MCF 10A (cell line): ENCODE measurements at regions of chr10 and their contacts with region 1.

Region 1: GRCh38 chr10:90652519-90652918 is 205.3 kb downstream of the HTR7 start:
- DNase-seq: peak; percentile 49
- H3K4me3 Mint-ChIP-seq: no peak overlapping the region
- H3K27ac Mint-ChIP-seq: no peak overlapping the region
- H3K4me1 Mint-ChIP-seq: no peaks in the 10 kb centered on the region
- H3K27me3 Mint-ChIP-seq: no peaks in the 10 kb centered on the region
- CTCF ChIP-seq: peak; percentile 57

Region 2: DNA sequence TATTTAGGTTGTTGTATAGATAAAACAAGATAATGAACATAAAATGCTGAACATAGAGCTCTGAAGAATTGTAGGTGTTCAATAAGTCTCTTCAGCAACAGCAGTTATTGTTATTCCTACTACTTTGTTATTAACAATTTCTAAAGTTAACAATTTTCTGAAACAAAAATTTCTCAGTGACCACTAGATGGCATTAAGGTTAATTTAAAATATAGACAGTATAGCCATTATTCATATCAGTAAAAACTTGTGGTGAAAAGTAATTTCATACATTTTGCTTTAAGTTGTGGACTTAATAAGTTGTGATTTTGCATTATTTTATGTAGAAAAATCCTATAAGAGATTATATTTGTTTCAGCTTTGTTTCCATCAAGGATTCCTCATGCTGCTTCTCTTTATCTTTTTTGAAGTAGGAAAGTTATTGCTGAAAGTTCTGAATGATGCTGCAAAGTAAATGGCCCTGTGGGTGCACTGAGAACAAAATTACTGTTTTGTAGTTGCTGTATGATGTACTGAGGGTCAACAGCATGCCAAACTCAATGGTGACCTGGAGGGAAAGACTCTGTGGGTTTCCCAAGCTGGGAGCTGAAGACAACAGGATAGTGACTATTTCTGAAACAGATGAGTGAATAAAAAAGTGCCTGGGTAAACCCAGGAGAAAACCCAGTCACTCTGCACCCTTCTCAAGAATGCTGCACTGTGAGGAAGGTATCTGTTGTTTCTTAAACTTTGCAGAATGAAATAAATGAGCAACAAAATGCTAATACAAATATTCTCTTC is 697.5 kb before region 1 on chr10:
- CTCF ChIA-PET with region 1: interaction called, 5 read pairs
- POLR2A ChIA-PET with region 1: no interaction called
- intact Hi-C with region 1: loop called (anchors 5 kb)
- DNase-seq: peak; percentile 13
- H3K4me3 Mint-ChIP-seq: no peak overlapping the region
- H3K27ac Mint-ChIP-seq: no peak overlapping the region
- H3K4me1 Mint-ChIP-seq: no peaks in the 10 kb centered on the region
- H3K27me3 Mint-ChIP-seq: no peaks in the 10 kb centered on the region
- CTCF ChIP-seq: peak; percentile 44

Region 3: DNA sequence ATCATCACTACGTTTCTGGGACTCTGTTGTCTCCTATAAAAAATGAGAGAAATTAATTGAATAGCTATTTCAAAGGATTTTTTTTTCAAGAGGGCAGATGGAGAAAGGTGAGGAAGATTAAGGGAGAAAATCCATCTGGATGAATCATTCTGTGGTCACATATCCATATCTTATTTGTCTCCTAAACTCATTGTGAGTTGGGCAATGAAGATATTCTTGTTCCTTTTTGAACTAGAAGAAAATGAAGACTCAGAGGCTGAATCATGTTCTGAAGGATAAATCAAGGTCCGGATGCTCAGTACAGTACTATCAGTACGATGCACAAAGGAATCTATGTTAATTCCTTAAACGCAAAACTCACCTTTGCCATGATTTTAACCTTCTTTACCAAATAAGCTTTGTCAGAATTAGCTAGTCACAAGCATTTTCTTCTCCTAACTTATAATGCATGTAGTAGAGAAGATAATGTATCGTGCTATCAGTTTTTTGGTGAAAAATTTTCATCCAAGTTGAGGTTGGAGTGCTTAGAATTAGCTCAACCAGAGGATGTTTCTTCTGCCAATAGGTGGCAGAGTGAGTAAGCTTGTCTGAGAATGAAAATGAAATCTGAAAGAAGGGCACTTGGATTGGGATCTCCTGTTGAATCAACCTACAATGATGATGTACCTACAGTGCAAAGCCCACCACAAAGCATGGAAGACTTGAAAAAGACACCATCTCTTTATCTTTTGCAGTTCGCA is 504.2 kb before region 1 on chr10:
- CTCF ChIA-PET with region 1: interaction called, 4 read pairs
- POLR2A ChIA-PET with region 1: no interaction called
- intact Hi-C with region 1: loop called (anchors 1 kb)
- DNase-seq: peak; percentile 60
- H3K4me3 Mint-ChIP-seq: no peak overlapping the region
- H3K27ac Mint-ChIP-seq: peak overlapping the region; percentile 44
- H3K4me1 Mint-ChIP-seq: peaks cover 14% of the 10 kb centered on the region
- H3K27me3 Mint-ChIP-seq: no peaks in the 10 kb centered on the region
- CTCF ChIP-seq: peak; percentile 57

Region 4: GRCh38 chr10:90288391-90288933 is 364.1 kb before region 1 on chr10:
- CTCF ChIA-PET with region 1: no interaction called
- POLR2A ChIA-PET with region 1: no interaction called
- intact Hi-C with region 1: loop called (anchors 1 kb)
- DNase-seq: peak; percentile 42
- H3K4me3 Mint-ChIP-seq: no peak overlapping the region
- H3K27ac Mint-ChIP-seq: no peak overlapping the region
- H3K4me1 Mint-ChIP-seq: peaks cover 25% of the 10 kb centered on the region
- H3K27me3 Mint-ChIP-seq: no peaks in the 10 kb centered on the region
- CTCF ChIP-seq: peak; percentile 31

Region 5: DNA sequence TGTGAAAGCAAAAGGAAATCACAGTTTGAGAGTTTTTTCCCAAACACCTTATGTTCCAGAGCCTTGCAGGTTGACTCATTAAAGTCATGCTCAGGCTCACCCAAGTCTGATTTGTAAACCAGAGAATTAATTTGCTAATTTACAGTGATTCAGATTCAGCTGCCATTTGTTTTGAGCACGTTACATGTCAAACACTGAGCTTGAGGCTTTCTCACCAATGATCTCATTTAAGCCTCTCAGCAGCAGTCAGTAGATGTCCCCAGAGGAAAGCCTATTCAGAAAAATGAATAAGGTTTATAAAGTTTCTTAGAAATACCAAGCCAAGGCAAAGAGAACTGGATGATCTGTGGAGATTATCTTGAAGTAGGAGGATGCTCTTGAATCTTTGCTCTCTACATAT is 215.1 kb before region 1 on chr10:
- CTCF ChIA-PET with region 1: no interaction called
- POLR2A ChIA-PET with region 1: no interaction called
- intact Hi-C with region 1: loop called (anchors 1 kb)
- DNase-seq: no peak
- H3K4me3 Mint-ChIP-seq: no peak overlapping the region
- H3K27ac Mint-ChIP-seq: peak overlapping the region; percentile 60
- H3K4me1 Mint-ChIP-seq: peaks cover 4% of the 10 kb centered on the region
- H3K27me3 Mint-ChIP-seq: no peaks in the 10 kb centered on the region
- CTCF ChIP-seq: no peak

Region 6: GRCh38 chr10:90642136-90642535 is 10.4 kb before region 1 on chr10:
- CTCF ChIA-PET with region 1: interaction called, 10 read pairs
- POLR2A ChIA-PET with region 1: interaction called, 6 read pairs
- intact Hi-C with region 1: no loop called
- DNase-seq: peak; percentile 1
- H3K4me3 Mint-ChIP-seq: no peak overlapping the region
- H3K27ac Mint-ChIP-seq: no peak overlapping the region
- H3K4me1 Mint-ChIP-seq: peaks cover 14% of the 10 kb centered on the region
- H3K27me3 Mint-ChIP-seq: no peaks in the 10 kb centered on the region
- CTCF ChIP-seq: no peak